Activated T-helper 1 cell treated with anti-CD3 and anti-CD28 coated beads, Interleukin-12 subunit alpha, Interleukin-12 subunit beta, Interleukin-2, Interleukin-4 antibody, amounts not matched to agents 30 ng/mL and 10 ng/mL and 1 ng/mL, durations not matched to agents 14 hours and 24 hours and 36 hours (primary cell): ENCODE measurements at regions of chr6 and their contacts with region 1.

Region 1: GRCh38 chr6:135640449-135641111 is 143.0 kb upstream of the AHI1 start:
- DNase-seq: no peak
- H3K4me3 Mint-ChIP-seq: peak overlapping the region; percentile 38
- H3K27ac Mint-ChIP-seq: peak overlapping the region; percentile 91
- H3K4me1 Mint-ChIP-seq: peaks cover 68% of the 10 kb centered on the region
- H3K27me3 Mint-ChIP-seq: peaks cover 2% of the 10 kb centered on the region

Region 2: DNA sequence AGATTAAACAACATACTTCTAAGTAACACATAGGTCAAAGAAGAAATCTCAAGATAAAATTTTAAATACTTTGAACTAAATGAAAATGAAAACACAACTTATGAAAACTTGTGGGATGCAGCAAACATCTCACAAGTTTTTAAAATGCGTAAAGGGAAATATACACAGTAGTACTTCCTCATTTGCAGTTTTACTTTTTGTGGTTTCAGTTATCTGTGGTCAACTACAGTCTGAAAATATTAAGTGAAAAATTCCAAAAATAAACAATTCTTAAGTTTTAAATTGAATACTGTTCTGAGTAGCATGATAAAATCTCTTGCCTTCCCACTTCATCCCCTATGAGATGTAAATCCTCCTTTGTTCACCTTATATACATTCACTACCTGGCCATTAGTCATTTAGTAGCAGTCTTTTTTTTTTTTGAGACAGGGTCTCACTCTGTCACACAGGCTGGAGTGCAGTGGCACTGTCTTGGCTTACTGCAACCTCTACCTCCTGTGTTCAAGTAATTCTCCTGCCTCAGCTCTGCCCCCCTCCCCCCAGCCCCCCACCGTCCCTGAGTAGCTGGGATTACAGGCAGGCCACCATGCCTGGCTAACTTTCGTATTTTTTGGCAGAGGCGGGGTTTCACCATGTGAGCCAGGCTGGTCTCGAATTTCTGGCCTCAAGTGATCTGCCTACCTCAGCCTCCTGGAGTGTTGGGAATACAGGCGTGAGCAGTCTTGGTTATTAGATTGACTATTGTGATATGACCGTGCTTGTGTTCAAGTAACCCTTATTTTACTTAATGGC is 11.6 kb after region 1 on chr6:
- intact Hi-C with region 1: loop called (anchors 1 kb)
- DNase-seq: no peak
- H3K4me3 Mint-ChIP-seq: peak overlapping the region; percentile 57
- H3K27ac Mint-ChIP-seq: peak overlapping the region; percentile 91
- H3K4me1 Mint-ChIP-seq: peaks cover 44% of the 10 kb centered on the region
- H3K27me3 Mint-ChIP-seq: no peaks in the 10 kb centered on the region

Region 3: GRCh38 chr6:135774006-135774405 is 133.4 kb after region 1 on chr6:
- intact Hi-C with region 1: no loop called
- DNase-seq: no peak
- H3K4me3 Mint-ChIP-seq: no peak overlapping the region
- H3K27ac Mint-ChIP-seq: no peak overlapping the region
- H3K4me1 Mint-ChIP-seq: no peaks in the 10 kb centered on the region
- H3K27me3 Mint-ChIP-seq: peaks cover 12% of the 10 kb centered on the region

Region 4: DNA sequence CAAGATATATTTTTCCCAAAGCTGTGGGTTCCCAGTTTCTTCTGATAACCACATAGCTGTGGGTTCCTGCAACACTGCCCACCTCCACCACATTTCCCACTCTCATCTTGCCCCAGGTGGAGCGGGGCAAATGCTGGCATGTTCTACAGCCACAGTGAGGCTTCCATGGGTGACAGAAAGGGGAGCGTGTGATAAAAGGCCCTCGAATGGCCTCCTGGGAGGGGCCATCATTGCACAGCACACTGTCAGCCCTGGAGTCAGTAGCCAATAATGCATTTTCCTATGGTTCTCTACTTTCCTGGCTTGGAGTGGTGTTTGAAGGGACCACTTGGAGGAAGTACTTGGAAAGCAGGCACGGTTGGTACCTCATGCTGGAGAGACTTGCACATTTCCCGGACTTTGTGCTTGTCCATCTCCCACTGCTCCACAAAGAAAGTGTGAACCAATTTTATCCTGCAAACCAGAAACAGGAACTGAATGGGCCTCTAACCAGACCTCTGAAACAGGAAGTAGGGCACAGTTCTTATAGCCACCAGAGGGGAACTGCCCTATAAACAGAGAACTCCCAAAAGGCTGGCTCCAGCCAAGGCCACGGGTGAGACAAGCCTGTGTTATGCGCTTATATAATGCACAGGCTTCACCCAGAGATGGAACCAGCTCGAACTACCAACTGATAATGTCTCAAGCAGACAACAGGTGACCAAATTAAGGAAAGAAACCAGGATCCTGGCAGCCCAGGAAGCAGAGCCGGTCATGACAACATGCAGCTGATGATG is 1143.1 kb after region 1 on chr6:
- intact Hi-C with region 1: loop called (anchors 10 kb)
- DNase-seq: no peak
- H3K4me3 Mint-ChIP-seq: peak overlapping the region; percentile 62
- H3K27ac Mint-ChIP-seq: peak overlapping the region; percentile 80
- H3K4me1 Mint-ChIP-seq: peaks cover 84% of the 10 kb centered on the region
- H3K27me3 Mint-ChIP-seq: no peaks in the 10 kb centered on the region